Endothelial cell of umbilical vein (primary cell): ENCODE measurements at regions of chr12 and their contacts with region 1.

Region 1: GRCh38 chr12:57888409-57889157 is 42.1 kb upstream of the CTDSP2 start:
- DNase-seq: peak; percentile 56
- H3K4me3 ChIP-seq: no peak overlapping the region
- H3K27ac ChIP-seq: no peak overlapping the region
- H3K4me1 ChIP-seq: peaks cover 17% of the 10 kb centered on the region
- H3K27me3 ChIP-seq: no peaks in the 10 kb centered on the region
- CTCF ChIP-seq: no peak
- POLR2A ChIP-seq: no peak

Region 2: DNA sequence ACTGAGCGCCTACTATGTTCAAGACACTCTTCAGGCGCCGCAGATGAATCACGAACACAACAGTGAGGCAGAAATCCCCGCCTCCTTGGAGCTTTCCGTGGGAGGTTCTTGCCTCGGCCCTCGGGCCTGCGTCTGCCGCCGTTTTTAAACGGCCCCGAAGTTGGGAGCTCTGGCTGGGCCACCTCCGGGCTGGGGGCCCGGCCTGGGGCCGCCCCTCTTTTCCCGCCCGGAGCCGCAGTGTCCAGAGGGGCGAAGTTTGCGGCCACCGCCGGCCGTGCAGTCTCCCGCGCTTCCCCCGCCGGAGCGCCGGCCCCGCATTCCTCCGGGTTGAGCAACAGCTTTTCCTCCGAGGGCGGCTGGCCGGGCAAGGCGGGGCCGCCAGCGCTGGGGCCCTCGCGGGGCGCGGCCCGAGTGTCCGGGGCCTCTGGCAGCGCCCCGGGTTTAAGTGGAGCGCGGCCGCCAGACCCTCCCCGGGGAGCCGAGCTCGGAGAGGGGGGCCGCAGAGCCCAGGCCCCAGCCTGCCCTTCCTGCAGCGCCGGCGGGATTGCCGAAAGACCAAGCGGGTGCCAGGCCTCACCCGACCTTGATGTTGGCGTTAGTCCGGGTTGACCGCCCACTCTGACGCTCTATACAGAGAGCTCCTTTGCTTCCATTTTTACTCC is 23.4 kb before region 1 on chr12:
- CTCF ChIA-PET with region 1: interaction called, 63 read pairs
- POLR2A ChIA-PET with region 1: interaction called, 8 read pairs
- dilution Hi-C with region 1: no loop called
- intact Hi-C with region 1: loop called (anchors 1 kb)
- DNase-seq: peak; percentile 81
- H3K4me3 ChIP-seq: peak overlapping the region; percentile 19 to 51 (median 38)
- H3K27ac ChIP-seq: peak overlapping the region; percentile 82
- H3K4me1 ChIP-seq: peaks cover 8% of the 10 kb centered on the region
- H3K27me3 ChIP-seq: no peaks in the 10 kb centered on the region
- CTCF ChIP-seq: no peak
- POLR2A ChIP-seq: peak; percentile 75